Activated CD4-positive, alpha-beta T cell treated with anti-CD3 and anti-CD28 coated beads, Interleukin-2, amount 10 ng/mL, durations not matched to agents 24 days and 14 days (primary cell): ENCODE measurements at regions of chr1 and their contacts with region 1.

Region 1: GRCh38 chr1:234610348-234611152 is 572 bp upstream of the IRF2BP2 start:
- DNase-seq: peak; percentile 98
- H3K4me3 Mint-ChIP-seq: peak overlapping the region; percentile 95
- H3K27ac Mint-ChIP-seq: peak overlapping the region; percentile 100
- H3K4me1 Mint-ChIP-seq: peaks cover 47% of the 10 kb centered on the region
- H3K27me3 Mint-ChIP-seq: peaks cover 2% of the 10 kb centered on the region

Region 2: DNA sequence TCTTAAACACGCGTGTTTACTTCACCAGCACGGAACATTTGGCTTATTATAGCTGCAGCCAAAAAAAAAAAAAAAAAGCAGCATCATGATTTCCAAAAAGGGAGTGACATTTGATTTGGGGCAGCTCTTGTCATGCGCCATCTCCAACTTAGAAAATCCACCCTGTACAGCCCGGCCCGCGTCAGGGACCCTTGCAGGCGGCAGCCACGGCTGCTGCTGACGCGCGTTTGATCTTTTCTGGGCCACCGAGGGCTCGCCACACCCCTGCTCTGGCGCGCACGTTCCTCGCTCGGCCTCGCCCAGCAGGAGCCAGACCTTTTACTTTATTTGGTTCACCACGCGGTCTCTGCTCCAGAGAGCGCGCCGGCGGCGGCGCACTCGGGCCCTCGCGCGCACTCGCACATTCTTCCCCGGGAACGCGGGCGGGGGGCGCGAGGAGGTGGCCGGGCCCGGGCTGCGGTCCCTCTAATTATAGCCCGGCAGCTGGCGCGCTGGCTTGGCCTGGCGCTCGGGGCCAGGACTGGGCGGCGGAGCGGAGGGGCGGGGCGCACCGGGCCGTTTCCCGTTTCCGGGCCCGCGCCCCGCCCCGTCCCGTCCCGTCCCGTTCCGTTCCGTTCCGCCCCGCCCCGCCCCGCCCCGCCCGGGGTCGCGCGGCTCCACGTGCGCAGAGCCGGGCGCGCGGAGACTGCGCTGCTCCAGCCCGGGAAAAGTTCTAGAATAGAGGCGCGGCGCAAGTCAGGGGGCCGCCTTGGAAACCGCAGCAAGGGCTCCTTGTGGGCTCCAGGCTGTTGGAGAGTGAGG is 10.7 kb before region 1 on chr1:
- intact Hi-C with region 1: loop called (anchors 1 kb)
- DNase-seq: peak; percentile 92
- H3K4me3 Mint-ChIP-seq: peak overlapping the region; percentile 89
- H3K27ac Mint-ChIP-seq: peak overlapping the region; percentile 97
- H3K4me1 Mint-ChIP-seq: peaks cover 47% of the 10 kb centered on the region
- H3K27me3 Mint-ChIP-seq: no peaks in the 10 kb centered on the region

Region 3: DNA sequence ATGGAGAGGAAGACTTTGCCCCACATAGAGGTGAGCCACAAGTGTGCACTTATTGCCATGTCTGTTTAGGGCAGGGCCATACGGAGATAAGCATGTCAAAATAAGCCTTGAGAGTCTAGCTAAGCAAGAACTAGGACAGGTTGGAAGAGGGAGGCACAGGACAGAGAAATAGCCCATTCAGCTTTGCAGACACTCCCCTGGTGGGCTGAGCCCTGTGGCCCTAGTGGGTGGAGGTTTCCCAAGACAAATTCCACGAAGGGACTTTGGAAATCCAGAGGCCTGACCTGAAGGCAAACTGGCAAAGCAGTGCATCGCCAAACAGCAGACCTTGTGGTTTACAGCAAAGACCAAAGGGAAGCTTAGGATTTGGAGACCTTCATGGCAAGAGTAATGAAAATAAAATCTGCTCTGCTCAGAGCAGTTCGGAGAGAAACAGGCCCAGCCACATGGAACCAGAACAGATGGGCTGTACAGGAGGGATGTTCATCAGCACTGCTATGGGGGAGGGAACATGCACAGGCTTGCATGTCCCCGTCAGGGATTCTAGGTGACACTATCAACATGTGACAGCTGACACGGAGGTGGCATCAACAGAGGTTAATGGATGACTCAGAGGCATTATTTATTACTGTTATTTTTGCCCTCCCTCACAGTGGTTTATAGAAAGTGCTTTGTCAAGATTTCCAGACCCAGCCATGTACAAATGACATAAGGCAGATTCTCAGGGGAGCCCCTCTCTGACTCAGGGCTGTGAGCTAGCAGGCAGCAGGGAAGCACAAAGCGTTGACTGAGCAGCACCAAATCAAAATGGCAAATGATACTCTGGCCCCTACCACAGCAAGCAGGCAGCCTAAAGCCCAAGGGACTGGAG is 89.5 kb after region 1 on chr1:
- intact Hi-C with region 1: no loop called
- DNase-seq: no peak
- H3K4me3 Mint-ChIP-seq: no peak overlapping the region
- H3K27ac Mint-ChIP-seq: peak overlapping the region; percentile 25
- H3K4me1 Mint-ChIP-seq: peaks cover 8% of the 10 kb centered on the region
- H3K27me3 Mint-ChIP-seq: peaks cover 3% of the 10 kb centered on the region

Region 4: GRCh38 chr1:234722904-234723720 is 112.6 kb after region 1 on chr1:
- intact Hi-C with region 1: loop called (anchors 1 kb)
- DNase-seq: peak; percentile 66
- H3K4me3 Mint-ChIP-seq: peak overlapping the region; percentile 76
- H3K27ac Mint-ChIP-seq: peak overlapping the region; percentile 96
- H3K4me1 Mint-ChIP-seq: peaks cover 82% of the 10 kb centered on the region
- H3K27me3 Mint-ChIP-seq: peaks cover 2% of the 10 kb centered on the region

Region 5: DNA sequence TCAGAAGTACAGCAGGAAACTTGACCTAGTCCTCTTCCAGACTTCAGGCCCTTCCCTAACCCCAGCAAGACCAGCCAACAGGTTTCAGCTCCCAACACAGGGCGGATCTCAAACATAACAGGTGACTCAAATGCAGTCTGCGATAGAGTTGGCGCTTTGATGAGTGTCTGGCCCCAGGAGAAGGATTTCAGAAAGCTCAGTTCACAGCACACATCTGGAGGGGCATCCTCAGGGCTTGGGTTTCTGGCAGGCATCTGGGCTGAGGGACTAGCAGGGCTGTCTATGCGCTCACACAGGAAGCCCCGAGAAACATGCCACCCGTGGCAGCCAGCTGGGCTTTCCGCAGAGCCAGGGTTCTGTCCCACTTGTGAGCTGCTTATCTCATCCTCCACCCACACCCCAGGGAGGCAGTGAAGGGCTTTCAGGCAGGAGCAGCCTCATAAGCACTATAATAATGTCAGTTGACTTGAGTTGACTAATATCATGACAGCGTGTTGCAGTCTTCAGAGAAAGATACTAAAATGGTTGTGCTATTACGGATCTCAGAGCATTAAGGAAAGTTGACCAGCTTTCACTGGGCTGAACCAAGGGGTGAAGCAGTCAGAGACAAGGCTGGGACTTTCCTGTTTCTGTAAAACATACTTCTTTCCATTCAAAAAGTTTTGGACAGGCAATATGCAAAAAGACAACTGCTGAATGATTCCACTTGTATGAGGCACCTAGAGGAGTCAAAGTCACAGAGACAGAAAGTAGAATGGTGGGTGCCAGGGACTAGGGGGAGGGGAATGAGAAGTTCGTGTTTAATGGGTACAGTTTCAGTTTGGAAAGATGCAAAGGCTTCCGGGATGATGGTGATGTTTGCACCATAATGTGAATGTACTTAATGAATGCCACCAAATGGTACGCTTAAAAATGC is 232.4 kb after region 1 on chr1:
- intact Hi-C with region 1: loop called (anchors 1 kb)
- DNase-seq: peak; percentile 89
- H3K4me3 Mint-ChIP-seq: peak overlapping the region; percentile 74
- H3K27ac Mint-ChIP-seq: peak overlapping the region; percentile 94
- H3K4me1 Mint-ChIP-seq: peaks cover 84% of the 10 kb centered on the region
- H3K27me3 Mint-ChIP-seq: no peaks in the 10 kb centered on the region

Region 6: DNA sequence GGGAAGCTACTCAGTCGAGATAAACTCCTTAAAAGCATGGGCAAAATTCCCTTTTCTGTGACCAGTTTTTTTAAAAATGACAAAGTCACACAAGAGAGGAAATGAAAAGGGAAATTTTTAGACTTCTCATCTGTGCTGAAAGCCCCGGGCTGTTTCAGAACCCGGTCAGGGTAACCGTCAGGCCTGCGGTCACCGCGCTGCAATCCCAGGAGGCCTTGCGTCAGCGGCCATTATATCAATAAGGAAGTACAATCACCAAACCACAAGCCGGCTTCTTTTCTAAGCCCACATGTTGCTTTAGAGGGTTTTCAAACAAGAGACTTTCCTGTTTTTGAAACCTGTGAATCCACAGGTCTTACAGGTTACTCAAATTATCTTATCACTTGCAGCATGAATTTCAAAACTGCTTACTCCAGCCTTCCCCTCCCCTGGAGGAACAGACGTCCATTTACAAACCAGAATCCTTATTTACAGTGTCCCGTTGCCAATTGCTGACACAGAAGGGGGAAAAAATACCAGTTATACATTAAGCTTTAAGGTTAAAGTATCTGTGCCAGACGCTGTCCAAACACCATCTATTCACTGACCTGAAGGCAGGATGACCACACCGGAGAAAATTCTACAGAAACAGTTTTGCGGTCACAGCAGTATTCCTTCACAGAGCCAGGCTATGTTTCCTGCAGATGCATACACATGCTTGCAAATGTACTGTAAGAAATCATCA is 352.8 kb after region 1 on chr1:
- intact Hi-C with region 1: loop called (anchors 1 kb)
- DNase-seq: peak; percentile 96
- H3K4me3 Mint-ChIP-seq: peak overlapping the region; percentile 79
- H3K27ac Mint-ChIP-seq: peak overlapping the region; percentile 97
- H3K4me1 Mint-ChIP-seq: peaks cover 69% of the 10 kb centered on the region
- H3K27me3 Mint-ChIP-seq: no peaks in the 10 kb centered on the region

Region 7: DNA sequence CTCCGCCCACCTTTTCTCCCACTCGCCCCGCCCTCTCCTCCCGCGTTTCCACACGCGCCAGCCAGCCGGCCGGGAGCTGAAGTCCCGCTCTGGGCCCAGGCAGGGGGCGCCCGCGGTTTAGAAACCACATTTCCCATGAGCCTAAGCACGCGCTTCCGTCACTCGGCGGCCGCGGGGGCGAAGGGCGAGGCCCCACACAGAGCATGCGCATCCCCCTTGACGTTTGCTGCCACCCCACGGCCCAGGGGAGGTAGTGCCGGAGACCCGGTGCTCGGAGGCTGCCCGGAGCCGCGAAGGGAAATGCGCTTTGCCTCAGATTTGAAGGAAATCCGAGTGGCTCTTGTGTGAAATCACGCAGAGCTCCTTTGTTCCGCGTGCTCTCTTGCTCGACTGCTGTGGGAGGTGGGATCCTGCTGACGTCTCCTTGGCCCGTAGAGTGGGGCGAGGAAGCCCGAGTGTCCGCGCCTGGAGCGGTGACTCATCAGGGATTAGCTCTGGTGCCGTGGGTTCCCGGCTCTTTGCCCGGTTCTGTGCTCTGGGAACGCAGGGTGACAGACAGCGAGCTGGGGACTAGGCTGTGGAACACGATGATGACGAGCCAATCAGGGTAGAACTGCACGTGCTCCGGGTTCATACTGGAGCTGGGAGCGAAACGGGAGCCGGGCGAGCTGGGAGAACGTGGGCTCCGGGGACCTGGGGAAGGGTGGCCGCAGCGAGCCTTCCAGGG is 894.1 kb after region 1 on chr1:
- intact Hi-C with region 1: loop called (anchors 5 kb)
- DNase-seq: peak; percentile 99
- H3K4me3 Mint-ChIP-seq: peak overlapping the region; percentile 95
- H3K27ac Mint-ChIP-seq: peak overlapping the region; percentile 97
- H3K4me1 Mint-ChIP-seq: peaks cover 25% of the 10 kb centered on the region
- H3K27me3 Mint-ChIP-seq: peaks cover 6% of the 10 kb centered on the region